Right ventricle myocardium inferior (tissue), 1 donor: ENCODE measurements at regions of chr2 and their contacts with region 1.

Region 1: DNA sequence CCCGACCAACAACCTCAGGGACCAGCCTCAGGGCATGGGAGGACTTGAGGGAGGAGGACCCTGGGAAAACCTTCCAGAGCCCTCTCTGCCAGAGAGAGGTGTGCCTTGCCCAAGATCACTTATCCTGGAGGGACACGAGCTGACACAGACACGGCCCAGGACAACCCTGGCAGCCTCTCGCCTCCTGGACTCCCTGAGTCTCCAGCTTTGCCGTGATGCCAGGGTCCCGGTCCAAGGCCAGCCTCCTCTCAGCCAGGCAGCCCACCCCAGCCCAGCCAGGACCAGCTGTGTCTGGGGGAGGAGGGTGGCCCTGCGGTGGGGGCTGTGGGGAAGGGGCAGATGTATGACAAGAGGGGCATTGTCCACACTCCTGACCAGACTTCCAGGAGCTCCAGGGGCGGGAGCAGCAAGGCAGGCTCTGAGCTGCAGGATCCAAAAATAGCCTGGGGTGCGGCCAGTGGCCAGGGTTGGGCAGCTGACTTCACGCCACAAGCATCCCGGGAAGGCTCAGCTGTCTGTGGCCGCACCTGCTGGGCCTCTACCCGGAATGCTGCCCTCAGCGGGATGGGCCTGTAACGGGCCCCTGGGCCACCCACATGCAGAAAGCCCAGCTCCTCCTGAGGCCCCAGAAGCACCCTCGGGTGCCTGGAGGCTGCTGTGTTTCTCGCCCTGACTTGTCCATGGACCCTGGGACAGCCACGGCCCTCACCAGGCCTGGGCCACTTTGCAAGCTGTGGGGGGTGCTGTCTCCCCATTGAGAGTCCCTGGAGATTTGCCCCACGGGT is 65.5 kb upstream of the GPC1 start:
- DNase-seq: peak; percentile 78
- ATAC-seq: peak; percentile 73

Region 2: DNA sequence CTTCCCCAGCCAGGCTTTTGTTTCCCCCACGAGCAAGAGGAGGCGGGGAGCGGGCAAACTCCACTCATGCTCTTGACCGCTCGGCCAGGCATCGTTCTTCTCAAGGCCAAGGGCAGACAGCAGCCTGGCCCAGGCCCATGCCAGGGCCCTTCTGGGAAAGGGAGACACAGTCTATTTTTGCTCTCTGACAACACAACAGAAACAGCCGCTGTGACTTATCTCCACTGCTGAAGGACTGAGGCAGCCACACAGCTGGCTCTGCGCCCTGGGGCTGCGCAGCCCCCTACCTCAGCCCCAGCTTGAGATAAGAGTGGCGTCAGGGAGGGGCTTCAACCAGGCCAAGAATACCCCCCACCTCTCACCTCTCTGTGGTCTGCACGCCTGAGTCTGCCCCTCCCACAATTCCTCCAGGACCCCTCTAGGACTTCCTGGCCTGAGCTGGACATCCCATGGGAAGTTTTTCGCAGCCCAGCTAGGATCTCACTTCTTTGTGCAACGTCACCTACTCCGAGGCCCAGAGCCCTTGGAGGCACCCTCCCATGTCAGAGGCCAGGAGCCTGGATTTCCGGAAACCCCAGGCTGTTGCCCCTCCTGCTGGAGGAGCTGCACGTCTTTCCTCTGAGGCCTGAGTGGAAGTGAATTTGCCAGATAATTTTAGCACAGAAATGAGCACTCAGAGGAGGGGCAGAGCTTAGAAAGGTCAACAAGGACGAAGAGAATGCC is 110.6 kb before region 1 on chr2:
- intact Hi-C with region 1: loop called (anchors 1 kb)
- DNase-seq: no peak
- ATAC-seq: peak; percentile 91

Region 3: GRCh38 chr2:240320204-240320993 is 49.6 kb before region 1 on chr2:
- intact Hi-C with region 1: no loop called
- DNase-seq: no peak
- ATAC-seq: peak; percentile 8

Region 4: DNA sequence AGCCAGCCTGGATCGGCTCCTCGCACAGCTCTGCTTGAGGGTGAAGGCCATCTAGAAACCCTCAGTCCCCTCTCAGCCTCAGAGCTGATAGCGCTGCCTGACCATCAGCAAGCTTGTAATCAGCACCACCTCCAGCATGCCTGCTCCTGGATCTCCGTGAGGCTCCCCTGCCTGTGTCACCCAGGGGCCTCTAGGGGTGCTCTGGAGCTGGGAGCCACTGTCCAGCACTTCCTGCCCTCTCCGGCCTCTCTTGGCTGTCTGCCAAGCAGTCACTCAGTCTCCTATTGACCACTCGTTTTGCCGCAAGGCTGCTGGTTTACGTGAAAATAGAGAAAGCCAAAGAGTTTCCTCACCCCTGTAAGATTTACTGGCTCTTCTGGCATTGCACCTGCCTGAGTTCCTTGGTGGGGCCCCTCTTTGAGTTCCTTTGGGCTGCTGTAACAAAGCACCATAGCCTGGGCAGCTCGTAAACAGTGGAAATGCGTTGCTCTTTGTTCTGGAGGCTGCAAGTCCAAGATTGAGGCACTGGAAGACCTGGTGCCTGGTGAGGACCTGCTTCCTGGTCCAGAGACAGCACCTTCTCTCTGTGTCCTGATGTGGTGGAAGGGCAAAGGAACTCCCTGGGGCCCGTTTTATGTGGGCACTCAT is 234.4 kb after region 1 on chr2:
- intact Hi-C with region 1: no loop called
- DNase-seq: peak; percentile 89
- ATAC-seq: peak; percentile 56